GM12878 (cell line): ENCODE measurements at regions of chr19 and their contacts with region 1.

Region 1: GRCh38 chr19:5321851-5322681 is 18.5 kb downstream of the PTPRS start:
- DNase-seq: peak; percentile 72
- ATAC-seq: peak; percentile 94
- H3K4me3 ChIP-seq: peak overlapping the region; percentile 32; the same call in 1 of the 2 replicates
- H3K27ac ChIP-seq: peak overlapping the region; percentile 76
- H3K4me1 ChIP-seq: peaks cover 29% of the 10 kb centered on the region
- H3K27me3 ChIP-seq: no peaks in the 10 kb centered on the region
- CTCF ChIP-seq: peak; percentile 30 to 55 (median 50); a peak in 5 of 6 replicates
- EP300 ChIP-seq: peak; percentile 68 to 76; a peak in 3 of 4 replicates
- POLR2A ChIP-seq: peak; percentile 29; the same call in 1 of the 2 replicates
- RAD21 ChIP-seq: peak; percentile 55

Region 2: DNA sequence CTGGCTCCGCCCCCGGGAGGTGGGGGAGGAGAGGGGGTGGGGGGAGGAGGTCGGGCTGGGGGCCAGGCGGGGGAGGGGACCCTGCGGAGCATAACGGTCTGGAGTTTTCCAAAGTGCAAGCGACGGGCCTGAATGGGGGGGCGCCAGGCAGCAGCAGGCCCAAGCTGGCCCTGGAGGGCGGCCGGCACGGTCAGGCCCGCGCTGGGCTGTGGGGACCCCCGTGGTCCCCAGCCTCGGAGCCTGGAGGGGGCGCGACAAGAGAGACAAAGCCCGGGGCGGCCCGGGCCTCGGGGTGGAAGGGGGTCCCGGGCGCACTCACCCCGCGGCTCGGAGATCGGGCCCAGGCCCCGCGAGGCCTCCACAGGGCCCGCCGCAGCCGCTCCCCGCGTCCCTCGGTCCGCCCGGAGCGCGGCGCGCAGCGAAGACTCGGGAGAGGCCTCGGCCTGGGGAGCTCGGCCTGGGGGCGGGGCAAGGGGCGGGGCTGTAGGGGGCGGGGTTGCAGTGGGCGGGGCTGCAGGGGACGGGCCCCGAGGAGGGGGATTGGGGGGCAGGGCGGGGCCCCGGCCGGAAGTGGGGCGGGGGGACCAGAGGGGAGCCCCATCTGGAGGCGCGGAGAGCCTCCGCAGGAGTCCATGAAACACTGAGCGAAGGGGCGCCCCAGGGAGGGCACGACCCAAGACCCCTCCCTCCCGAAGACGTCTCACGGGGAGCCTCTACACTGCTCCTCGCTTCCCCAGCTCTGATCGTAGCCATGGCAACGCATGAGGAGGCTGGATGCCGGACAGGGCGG is 29.0 kb before region 1 on chr19:
- CTCF ChIA-PET with region 1: interaction called, 9 read pairs
- POLR2A ChIA-PET with region 1: interaction called, 3 read pairs
- RAD21 ChIA-PET with region 1: interaction called, 14 read pairs
- SMC1A ChIA-PET with region 1: interaction called, 4 read pairs
- in situ Hi-C with region 1: no loop called
- intact Hi-C with region 1: no loop called
- DNase-seq: no peak
- ATAC-seq: peak; percentile 80
- H3K4me3 ChIP-seq: no peak overlapping the region
- H3K27ac ChIP-seq: no peak overlapping the region
- H3K4me1 ChIP-seq: peaks cover 12% of the 10 kb centered on the region
- H3K27me3 ChIP-seq: peaks cover 0 to 4% of the 10 kb centered on the region in 2 experiments; a peak in 2 of 4 replicates
- CTCF ChIP-seq: no peak
- EP300 ChIP-seq: no peak
- POLR2A ChIP-seq: no peak
- RAD21 ChIP-seq: no peak

Region 3: GRCh38 chr19:5334824-5335500 is 12.9 kb after region 1 on chr19:
- CTCF ChIA-PET with region 1: interaction called, 62 read pairs
- POLR2A ChIA-PET with region 1: interaction called, 18 read pairs
- RAD21 ChIA-PET with region 1: interaction called, 58 read pairs
- SMC1A ChIA-PET with region 1: interaction called, 15 read pairs
- in situ Hi-C with region 1: no loop called
- intact Hi-C with region 1: no loop called
- DNase-seq: no peak
- ATAC-seq: no peak
- H3K4me3 ChIP-seq: no peak overlapping the region
- H3K27ac ChIP-seq: no peak overlapping the region
- H3K4me1 ChIP-seq: peaks cover 32% of the 10 kb centered on the region
- H3K27me3 ChIP-seq: peaks cover 2 to 9% of the 10 kb centered on the region in 2 experiments; a peak in 2 of 4 replicates
- CTCF ChIP-seq: no peak
- EP300 ChIP-seq: no peak
- POLR2A ChIP-seq: no peak
- RAD21 ChIP-seq: no peak

Region 4: GRCh38 chr19:5340637-5341447 is 18.8 kb after region 1 on chr19 and contains the start of gene PTPRS:
- CTCF ChIA-PET with region 1: interaction called, 62 read pairs
- POLR2A ChIA-PET with region 1: interaction called, 18 read pairs
- RAD21 ChIA-PET with region 1: interaction called, 58 read pairs
- SMC1A ChIA-PET with region 1: interaction called, 15 read pairs
- in situ Hi-C with region 1: no loop called
- intact Hi-C with region 1: no loop called
- DNase-seq: no peak
- ATAC-seq: peak; percentile 59
- H3K4me3 ChIP-seq: peak within 1 kb of the TSS; percentile 55; the same call in 1 of the 2 replicates
- H3K27ac ChIP-seq: no peak within 1 kb of the TSS
- H3K4me1 ChIP-seq: peaks cover 8% of the 10 kb centered on the region
- H3K27me3 ChIP-seq: peaks cover 2 to 9% of the 10 kb centered on the region in 2 experiments; a peak in 2 of 4 replicates
- CTCF ChIP-seq: no peak
- EP300 ChIP-seq: 0 out of 4 replicates have a peak, but pooled peaks of 1 of the 2 experiments have one; percentile 12
- POLR2A ChIP-seq: no peak
- RAD21 ChIP-seq: no peak
- polyA plus RNA-seq, gene PTPRS: 0.09 to 0.23 TPM

Region 5: DNA sequence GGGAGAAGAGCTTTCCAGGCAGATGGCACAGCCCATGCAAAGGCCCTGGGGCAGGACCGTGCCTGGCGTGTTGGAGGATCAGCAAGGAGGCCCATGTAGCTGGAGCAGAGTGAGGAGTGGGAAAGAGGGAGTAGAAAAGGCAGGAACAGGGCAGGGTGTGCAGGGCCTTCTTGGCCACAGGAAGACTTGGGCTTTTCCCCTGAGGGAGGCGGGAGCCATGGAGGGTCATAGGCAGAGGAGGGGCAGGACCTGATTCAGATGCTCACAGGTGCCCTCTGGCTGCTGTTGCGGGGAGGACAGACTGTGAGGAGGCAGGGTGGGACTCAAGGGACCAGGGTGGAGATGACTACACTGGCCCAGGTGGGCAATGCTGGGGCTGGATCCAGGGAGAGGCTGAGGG is 32.3 kb after region 1 on chr19:
- CTCF ChIA-PET with region 1: interaction called, 9 read pairs
- POLR2A ChIA-PET with region 1: no interaction called
- RAD21 ChIA-PET with region 1: interaction called, 3 read pairs
- SMC1A ChIA-PET with region 1: interaction called, 6 read pairs
- in situ Hi-C with region 1: no loop called
- intact Hi-C with region 1: loop called (anchors 1 kb)
- DNase-seq: no peak
- ATAC-seq: peak; percentile 80
- H3K4me3 ChIP-seq: no peak overlapping the region
- H3K27ac ChIP-seq: no peak overlapping the region
- H3K4me1 ChIP-seq: no peaks in the 10 kb centered on the region
- H3K27me3 ChIP-seq: no peaks in the 10 kb centered on the region
- CTCF ChIP-seq: peak; percentile 29 to 53 (median 33); a peak in 3 of 6 replicates
- EP300 ChIP-seq: no peak
- POLR2A ChIP-seq: no peak
- RAD21 ChIP-seq: 0 out of 2 replicates have a peak, but pooled peaks have one; percentile 31

Region 6: GRCh38 chr19:5372572-5373200 is 50.6 kb after region 1 on chr19:
- CTCF ChIA-PET with region 1: interaction called, 14 read pairs
- POLR2A ChIA-PET with region 1: no interaction called
- RAD21 ChIA-PET with region 1: no interaction called
- SMC1A ChIA-PET with region 1: interaction called, 3 read pairs
- in situ Hi-C with region 1: no loop called
- intact Hi-C with region 1: no loop called
- DNase-seq: no peak
- ATAC-seq: no peak
- H3K4me3 ChIP-seq: no peak overlapping the region
- H3K27ac ChIP-seq: no peak overlapping the region
- H3K4me1 ChIP-seq: no peaks in the 10 kb centered on the region
- H3K27me3 ChIP-seq: no peaks in the 10 kb centered on the region
- CTCF ChIP-seq: no peak
- EP300 ChIP-seq: no peak
- POLR2A ChIP-seq: no peak
- RAD21 ChIP-seq: no peak

Region 7: DNA sequence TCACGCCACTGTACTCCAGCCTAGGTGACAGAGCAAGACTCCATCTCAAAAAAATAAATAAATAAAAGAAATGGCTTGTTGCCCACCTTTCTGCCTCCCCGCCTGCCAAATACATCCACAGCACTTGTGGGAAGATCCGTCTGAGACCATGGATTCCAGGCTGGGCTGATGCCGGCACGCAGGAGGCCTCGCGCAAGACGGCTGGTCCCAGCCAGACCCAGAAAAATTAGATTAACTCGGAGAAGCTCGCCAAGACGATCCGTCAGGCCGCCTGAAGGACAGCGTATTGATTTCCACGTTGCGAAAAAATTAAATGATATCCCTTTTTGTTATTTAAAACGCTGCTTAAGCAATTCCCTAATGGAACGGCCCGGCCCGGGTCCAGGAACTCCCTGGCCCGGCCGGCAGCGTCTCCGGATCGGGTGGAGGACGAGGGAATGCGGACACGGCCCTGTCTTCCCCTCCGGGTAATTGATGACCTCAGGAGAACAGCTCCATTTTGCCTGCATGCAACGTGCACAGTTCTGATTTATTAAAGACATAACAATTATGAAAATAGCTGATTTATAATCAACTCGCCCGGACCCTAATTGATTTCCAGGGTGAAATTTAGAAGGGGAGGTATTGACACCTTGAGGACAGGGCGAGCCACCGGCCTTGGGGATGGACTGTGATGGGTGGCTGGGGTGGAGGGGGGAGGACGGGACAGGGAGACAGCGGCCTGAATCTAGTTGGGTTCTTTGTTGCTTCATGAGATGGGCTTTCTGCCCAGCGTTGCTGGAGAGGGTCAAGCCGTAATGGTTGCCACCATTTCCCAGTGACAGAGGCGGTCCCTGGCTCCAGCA is 185.2 kb after region 1 on chr19:
- CTCF ChIA-PET with region 1: no interaction called
- POLR2A ChIA-PET with region 1: no interaction called
- RAD21 ChIA-PET with region 1: no interaction called
- SMC1A ChIA-PET with region 1: no interaction called
- in situ Hi-C with region 1: no loop called
- intact Hi-C with region 1: no loop called
- DNase-seq: no peak
- ATAC-seq: no peak
- H3K4me3 ChIP-seq: no peak overlapping the region
- H3K27ac ChIP-seq: no peak overlapping the region
- H3K4me1 ChIP-seq: no peaks in the 10 kb centered on the region
- H3K27me3 ChIP-seq: no peaks in the 10 kb centered on the region
- CTCF ChIP-seq: no peak
- EP300 ChIP-seq: no peak
- POLR2A ChIP-seq: no peak
- RAD21 ChIP-seq: no peak

Region 8: DNA sequence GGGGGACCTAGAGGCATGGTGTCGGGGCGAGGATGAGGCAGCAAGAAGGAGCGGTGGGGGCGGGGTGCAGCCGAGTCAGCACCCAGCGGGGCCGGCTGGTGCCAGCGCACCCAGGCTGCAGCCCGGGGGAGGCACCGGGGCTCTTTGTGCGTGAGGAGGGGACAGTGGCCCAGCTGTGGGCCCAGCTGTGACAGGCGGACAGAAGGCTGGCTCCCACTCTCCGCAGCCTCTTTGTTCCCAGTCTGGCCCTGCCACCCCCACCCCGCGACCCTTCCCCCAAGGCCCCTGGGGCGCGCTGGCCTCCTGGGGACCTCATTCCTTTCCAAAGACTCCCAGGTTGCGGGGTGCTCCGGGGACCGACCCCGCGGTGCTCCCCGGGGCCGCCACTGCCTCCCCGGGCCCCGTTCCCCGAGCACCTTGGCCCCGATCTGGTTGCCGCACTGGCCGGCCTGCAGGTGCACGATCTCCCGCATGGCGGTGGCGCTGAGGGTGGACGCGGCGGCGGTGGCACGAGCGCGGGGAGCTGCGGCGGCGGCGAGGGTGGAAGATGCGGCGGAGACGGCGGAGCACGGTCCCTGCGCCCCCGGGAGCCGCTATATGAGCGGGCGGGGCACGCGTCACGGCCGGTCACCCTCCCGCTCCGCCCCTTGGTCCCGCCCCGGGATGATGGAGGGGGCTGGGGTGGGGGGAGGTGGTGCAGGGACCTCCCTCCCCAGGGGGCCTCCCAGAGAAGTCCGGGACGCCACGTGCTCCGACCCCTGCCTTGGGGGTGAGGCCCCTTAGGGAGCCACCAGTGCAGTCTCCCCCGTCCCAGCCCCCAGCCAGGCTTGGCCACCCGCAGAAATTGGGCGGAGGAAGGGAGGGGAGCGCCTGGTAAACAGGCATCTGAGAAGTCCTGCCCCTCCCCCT is 1179.9 kb after region 1 on chr19 and contains the start of gene TUBB4A:
- CTCF ChIA-PET with region 1: no interaction called
- POLR2A ChIA-PET with region 1: no interaction called
- RAD21 ChIA-PET with region 1: no interaction called
- SMC1A ChIA-PET with region 1: no interaction called
- in situ Hi-C with region 1: no loop called
- intact Hi-C with region 1: no loop called
- DNase-seq: no peak
- ATAC-seq: peak; percentile 77
- H3K4me3 ChIP-seq: peak within 1 kb of the TSS; percentile 71
- H3K27ac ChIP-seq: no peak within 1 kb of the TSS
- H3K4me1 ChIP-seq: peaks cover 2% of the 10 kb centered on the region
- H3K27me3 ChIP-seq: peaks cover 0 to 2% of the 10 kb centered on the region in 2 experiments; a peak in 3 of 4 replicates
- CTCF ChIP-seq: peak in 1 of 3 experiments; percentile 14; a peak in 1 of 6 replicates
- EP300 ChIP-seq: no peak
- POLR2A ChIP-seq: peak; percentile 70
- RAD21 ChIP-seq: no peak
- polyA plus RNA-seq, gene TUBB4A: 0.79 to 0.85 TPM